SK-MEL-5 (cell line): ENCODE measurements at regions of chr7 and their contacts with region 1.

Region 1: DNA sequence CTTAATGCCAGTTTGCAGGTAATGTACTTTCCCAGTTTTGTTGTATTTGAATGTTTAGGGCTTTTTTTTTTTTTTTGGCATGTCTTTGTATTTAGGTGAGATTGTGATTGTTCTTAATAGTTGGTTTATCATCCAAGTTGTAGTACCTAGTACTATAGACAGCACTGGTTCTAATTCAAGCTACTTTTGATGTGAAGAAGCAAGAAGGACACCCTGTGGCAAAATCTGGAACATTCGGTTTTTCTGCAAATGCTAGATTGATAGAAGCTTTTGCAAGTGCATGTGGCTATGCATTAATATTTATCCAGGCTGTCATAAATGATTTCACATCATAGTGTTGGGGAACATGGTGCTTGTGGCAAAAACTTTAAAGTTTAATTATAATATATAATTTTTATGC is 248.9 kb downstream of the FOXP2 start:
- DNase-seq: peak; percentile 88

Region 2: DNA sequence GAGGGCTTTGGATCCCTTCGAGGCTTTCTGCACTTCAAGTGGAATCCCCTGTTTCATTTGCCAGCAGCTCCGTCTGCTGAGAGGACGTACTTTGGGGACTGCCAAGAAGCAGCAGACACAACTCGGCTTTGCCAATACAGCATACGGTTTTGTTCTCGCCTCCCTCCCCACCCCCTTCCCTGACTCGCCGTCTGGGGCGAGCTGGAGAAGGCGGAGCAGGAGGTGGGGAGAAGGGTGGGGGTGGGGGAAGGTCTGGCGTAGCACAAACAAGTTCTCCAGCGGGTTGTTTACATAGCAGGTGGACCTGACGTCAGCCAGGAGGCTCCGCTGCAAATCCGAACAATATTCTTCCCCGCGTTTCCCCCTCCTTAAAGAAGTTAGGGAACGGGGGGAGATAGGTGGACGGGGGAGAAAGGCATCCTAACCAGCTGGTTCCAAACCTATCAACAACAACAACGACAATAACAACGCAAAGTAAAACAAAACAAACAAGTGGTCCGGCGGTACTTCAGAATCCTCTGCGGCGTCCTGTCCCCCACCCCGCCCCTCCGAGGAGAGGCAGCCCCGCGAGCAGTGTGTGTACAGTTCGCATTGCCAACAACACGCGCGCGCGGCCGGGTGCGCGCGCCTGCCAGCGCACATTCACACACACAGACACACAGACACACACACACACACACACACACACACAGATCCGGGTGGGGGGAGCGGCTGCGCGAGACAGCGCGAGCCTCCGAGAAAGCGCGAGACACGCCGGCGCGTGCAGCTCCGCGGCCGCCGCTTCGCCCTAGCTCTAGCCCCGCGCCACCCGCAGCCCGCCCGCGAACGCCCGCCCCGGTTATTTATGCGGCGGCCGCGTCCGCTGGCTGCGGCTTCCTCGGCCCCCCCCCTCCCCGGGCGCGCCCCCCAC is 577.7 kb before region 1 on chr7:
- in situ Hi-C with region 1: loop called (anchors 25 kb)
- DNase-seq: peak; percentile 62

Region 3: DNA sequence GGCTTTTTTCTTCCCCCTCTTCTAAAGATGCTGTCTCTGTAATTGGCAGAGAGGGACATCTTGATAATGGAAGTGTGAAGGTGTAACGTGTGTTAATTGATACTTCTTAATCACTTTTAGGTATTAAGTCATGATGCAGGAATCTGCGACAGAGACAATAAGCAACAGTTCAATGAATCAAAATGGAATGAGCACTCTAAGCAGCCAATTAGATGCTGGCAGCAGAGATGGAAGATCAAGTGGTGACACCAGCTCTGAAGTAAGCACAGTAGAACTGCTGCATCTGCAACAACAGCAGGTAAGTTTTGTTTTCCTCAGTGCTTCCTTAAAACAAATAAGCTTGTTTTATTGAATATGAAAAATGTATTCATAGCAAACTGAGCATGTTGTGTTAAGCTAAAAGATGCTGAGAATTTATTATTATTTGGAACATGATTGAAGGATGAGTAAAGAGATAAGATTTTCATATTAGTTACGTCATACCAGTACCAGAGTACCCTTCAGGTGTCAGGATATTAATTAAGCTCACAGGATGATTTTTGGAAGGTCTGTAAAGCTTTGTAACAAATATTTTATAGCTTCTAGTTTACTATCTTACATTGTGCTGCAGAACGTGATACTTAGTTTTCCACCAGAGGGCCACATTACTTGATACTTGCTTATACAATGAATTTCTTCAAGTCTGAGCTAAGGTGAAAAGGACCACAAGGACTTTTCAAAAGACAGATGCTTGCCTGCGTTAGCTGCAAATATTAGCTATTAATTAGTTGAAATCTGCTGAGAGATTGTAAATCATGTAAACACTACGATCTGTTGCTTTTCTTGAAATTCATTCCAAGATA is 236.9 kb before region 1 on chr7:
- in situ Hi-C with region 1: loop called (anchors 25 kb)
- DNase-seq: peak; percentile 75

Region 4: DNA sequence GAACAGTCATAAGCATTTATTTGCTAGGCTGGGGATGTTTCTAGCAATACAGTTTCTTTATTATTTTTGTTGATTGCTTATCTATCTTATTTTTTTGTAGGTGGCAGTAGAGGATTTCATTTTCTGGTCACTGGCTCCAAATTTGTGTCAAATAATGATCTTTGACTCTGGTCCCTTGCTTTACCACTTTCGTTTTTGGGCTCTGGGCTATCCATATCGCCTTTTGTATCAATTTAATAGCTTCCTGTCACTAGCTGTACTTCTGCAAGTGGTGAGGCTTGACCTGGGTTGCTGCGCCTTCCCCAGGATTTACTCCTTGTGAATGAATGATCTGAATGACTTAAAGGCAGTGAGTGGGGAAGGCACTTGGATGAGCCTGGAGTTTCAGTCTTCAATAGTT is 306.8 kb after region 1 on chr7:
- in situ Hi-C with region 1: no loop called
- DNase-seq: no peak